Breast epithelium (tissue), 4 donors: ENCODE measurements at regions of chr2 and their contacts with region 1.

Region 1: GRCh38 chr2:234981197-234982117 is 29.6 kb downstream of the SH3BP4 start:
- DNase-seq: peak in 1 of 2 donors; percentile 68
- H3K4me3 ChIP-seq: peak overlapping the region in 2 of 3 donors; percentile 18 to 49
- H3K27ac ChIP-seq: peak overlapping the region; percentile 82 to 89
- H3K4me1 ChIP-seq: peaks cover 6 to 27% of the 10 kb centered on the region in 2 donors
- H3K27me3 ChIP-seq: no peaks in the 10 kb centered on the region
- CTCF ChIP-seq: no peak
- POLR2A ChIP-seq: no peak

Region 2: DNA sequence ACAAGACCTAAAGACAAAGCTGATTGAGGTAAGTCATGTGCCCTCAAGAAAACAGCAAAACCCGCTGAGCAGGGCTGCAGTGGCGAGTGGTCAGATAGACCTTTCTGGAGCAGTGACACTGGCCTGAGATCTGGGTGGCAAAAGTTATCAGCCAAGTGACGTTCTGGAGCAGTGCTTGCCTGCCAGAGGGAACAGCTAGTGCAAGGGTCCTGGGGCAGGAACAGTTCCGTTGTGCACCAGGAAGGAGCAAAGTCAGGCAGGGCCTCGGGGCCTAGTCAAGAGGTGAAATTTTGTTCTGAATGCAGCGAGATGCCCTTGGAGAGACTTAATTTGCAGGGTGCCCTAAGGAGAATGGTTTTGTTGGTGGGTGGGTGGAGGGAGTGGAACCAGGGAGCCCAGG is 37.4 kb after region 1 on chr2:
- intact Hi-C with region 1: loop called (anchors 2 kb)
- DNase-seq: no peak
- H3K4me3 ChIP-seq: no peak overlapping the region
- H3K27ac ChIP-seq: no peak overlapping the region
- H3K4me1 ChIP-seq: no peaks in the 10 kb centered on the region
- H3K27me3 ChIP-seq: no peaks in the 10 kb centered on the region
- CTCF ChIP-seq: no peak
- POLR2A ChIP-seq: no peak

Region 3: GRCh38 chr2:235055891-235056516 is 74.5 kb after region 1 on chr2:
- intact Hi-C with region 1: loop called (anchors 2 kb)
- DNase-seq: no peak
- H3K4me3 ChIP-seq: no peak overlapping the region
- H3K27ac ChIP-seq: no peak overlapping the region
- H3K4me1 ChIP-seq: peaks cover 0 to 5% of the 10 kb centered on the region in 2 donors
- H3K27me3 ChIP-seq: no peaks in the 10 kb centered on the region
- CTCF ChIP-seq: peak in 2 of 3 donors; percentile 35 to 47
- POLR2A ChIP-seq: no peak